Dorsolateral prefrontal cortex (tissue), 120 donors: ENCODE measurements at regions of chr9 and their contacts with region 1.

Region 1: GRCh38 chr9:13427587-13427986 is 148.1 kb upstream of the MPDZ start:
- DNase-seq: peak in 1 of 10 donors; percentile 30
- H3K4me3 ChIP-seq: peak overlapping the region in 1 of 59 donors; percentile 16
- H3K27ac ChIP-seq: peak overlapping the region in 19 of 59 donors; percentile 4 to 86 (median 46)
- H3K27me3 ChIP-seq: peaks cover 0 to 5% (median 0%) of the 10 kb centered on the region in 45 donors
- CTCF ChIP-seq: peak; percentile 76 to 92 (median 86)

Region 2: DNA sequence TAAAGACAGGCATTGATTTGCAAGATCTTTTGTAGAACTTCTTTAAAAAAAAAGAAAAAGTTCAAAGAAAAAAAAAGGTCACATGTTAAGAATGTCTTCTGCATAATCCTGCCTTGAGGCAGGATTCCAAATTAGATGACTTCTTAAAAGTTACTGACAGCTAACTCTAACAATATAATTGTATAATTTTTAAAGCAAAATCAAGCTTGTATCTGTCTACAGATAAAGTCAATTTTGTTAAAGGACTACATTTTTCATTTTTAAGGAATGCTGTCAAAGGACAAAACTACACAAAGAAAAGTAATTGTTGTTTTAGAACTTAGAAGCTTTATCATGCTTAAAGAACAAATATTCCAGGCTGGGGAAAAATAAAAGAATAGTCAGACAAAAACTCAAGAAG is 205.8 kb before region 1 on chr9:
- intact Hi-C with region 1: loop called in 1 of 2 experiments (anchors 5 kb)
- DNase-seq: no peak
- H3K4me3 ChIP-seq: no peak overlapping the region
- H3K27ac ChIP-seq: no peak overlapping the region
- H3K27me3 ChIP-seq: no peaks in the 10 kb centered on the region
- CTCF ChIP-seq: no peak

Region 3: DNA sequence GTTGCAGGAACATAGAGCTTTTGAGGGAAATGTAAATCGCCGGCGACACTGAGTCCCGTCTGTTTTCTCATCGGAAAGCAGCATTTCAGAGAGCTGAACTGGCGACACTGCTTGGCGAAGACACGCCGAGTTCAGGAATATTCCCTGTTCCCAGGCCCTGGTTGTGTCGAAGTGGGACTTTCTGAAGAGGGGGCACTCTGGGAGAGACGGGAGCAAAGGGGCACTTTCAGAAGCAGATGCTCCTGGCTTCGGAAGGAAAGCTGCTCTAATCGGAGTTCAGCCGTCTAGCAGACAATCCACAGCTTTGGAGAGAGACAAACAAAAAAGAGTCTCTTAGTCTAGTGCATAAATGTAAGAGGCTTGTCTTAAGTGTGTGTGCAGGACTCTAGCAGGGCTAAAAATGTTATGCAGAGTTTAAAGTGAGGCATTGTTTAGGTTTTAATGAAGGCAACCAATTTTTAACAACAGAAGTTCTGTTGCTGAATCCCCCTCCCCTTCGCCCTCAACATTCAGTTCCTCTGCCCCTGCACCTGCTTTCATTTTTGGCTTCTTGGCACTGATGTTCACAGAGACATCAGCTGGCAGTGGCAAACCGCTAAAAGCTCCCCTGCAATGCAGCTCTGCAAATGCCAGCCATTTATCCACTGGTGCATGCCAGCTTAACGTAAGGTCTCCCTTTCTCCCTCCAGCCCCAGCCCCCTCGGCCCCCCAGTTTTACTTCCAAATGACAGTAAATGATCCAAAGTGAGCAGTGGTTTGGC is 141.4 kb after region 1 on chr9:
- intact Hi-C with region 1: loop called in 1 of 2 experiments (anchors 5 kb)
- DNase-seq: peak in 8 of 10 donors; percentile 17 to 70 (median 47)
- H3K4me3 ChIP-seq: peak overlapping the region; percentile 14 to 71 (median 50)
- H3K27ac ChIP-seq: peak overlapping the region; percentile 25 to 96 (median 89)
- H3K27me3 ChIP-seq: no peaks in the 10 kb centered on the region
- CTCF ChIP-seq: peak in 3 of 56 donors; percentile 3 to 6 (median 5)

Region 4: DNA sequence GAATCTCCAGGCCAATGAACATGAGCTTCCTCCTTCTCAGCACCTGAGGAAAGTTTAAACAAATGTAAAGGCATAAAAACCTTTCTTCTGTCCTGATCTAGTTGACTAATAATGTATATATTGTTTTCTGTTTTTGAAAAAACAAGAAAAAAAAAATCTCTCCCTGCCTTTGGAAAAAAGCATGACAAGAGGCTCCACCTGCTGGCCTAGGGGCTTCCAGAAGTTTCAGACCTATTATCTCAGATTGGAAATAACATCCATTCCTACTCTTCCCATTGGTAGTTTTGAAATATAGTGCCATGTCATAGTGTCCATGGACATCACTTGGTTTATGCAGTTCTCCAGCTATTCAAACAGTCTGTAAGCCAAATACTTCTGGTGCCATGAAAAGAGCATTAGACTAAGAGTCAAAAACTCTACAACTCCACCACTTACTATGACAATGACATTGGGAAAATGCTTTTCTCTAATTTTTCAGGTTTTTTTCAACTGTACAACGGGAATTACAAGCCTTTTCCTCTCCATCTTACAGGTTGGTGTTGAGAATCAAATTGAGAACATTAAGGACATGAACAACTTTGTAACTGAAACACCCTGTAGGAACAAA is 261.5 kb after region 1 on chr9:
- intact Hi-C with region 1: loop called in 1 of 2 experiments (anchors 5 kb)
- DNase-seq: peak in 4 of 10 donors; percentile 11 to 44 (median 28)
- H3K4me3 ChIP-seq: no peak overlapping the region
- H3K27ac ChIP-seq: peak overlapping the region in 16 of 59 donors; percentile 10 to 72 (median 45)
- H3K27me3 ChIP-seq: no peaks in the 10 kb centered on the region
- CTCF ChIP-seq: peak in 55 of 56 donors; percentile 11 to 79 (median 57)

Region 5: GRCh38 chr9:14353222-14354056 is 925.9 kb after region 1 on chr9:
- intact Hi-C with region 1: loop called (anchors 5 kb)
- DNase-seq: peak; percentile 92 to 99 (median 96)
- H3K4me3 ChIP-seq: peak overlapping the region in 55 of 59 donors; percentile 1 to 55 (median 37)
- H3K27ac ChIP-seq: peak overlapping the region; percentile 27 to 97 (median 85)
- H3K27me3 ChIP-seq: peaks cover 0 to 17% (median 0%) of the 10 kb centered on the region in 45 donors
- CTCF ChIP-seq: peak; percentile 82 to 97 (median 94)

Region 6: DNA sequence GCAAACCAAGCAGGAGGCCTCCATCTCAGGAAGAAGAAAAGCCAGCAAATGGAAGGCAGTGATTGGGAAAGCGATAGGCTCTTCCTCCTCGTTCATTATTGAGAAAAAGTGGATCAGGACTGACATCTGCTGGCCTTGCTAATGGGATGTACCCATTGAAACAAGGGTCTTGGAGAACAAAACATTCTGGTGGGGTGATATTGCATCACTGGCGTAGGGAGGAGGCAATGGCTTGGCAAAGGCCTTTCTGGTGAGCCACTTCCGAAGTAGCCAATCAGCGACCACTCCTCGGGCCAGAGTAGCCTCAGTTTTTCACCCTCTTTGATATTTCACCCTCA is 973.0 kb after region 1 on chr9:
- intact Hi-C with region 1: loop called (anchors 2 to 10 kb)
- DNase-seq: peak in 9 of 10 donors; percentile 36 to 80 (median 55)
- H3K4me3 ChIP-seq: peak overlapping the region in 45 of 59 donors; percentile 0 to 51 (median 31)
- H3K27ac ChIP-seq: peak overlapping the region in 56 of 59 donors; percentile 14 to 95 (median 74)
- H3K27me3 ChIP-seq: no peaks in the 10 kb centered on the region
- CTCF ChIP-seq: peak; percentile 26 to 87 (median 69)

Region 7: GRCh38 chr9:14428781-14429230 is 1001.2 kb after region 1 on chr9:
- intact Hi-C with region 1: loop called (anchors 5 kb)
- DNase-seq: peak; percentile 60 to 84 (median 73)
- H3K4me3 ChIP-seq: peak overlapping the region in 11 of 59 donors; percentile 7 to 38 (median 22)
- H3K27ac ChIP-seq: peak overlapping the region in 2 of 59 donors; percentile 29 to 50
- H3K27me3 ChIP-seq: no peaks in the 10 kb centered on the region
- CTCF ChIP-seq: peak; percentile 72 to 92 (median 84)